Right ventricle myocardium superior (tissue), 1 donor: ENCODE measurements at regions of chr6 and their contacts with region 1.

Region 1: GRCh38 chr6:26043384-26044139 is 43.7 kb upstream of the HFE start:
- DNase-seq: peak; percentile 68
- ATAC-seq: peak; percentile 88

Region 2: DNA sequence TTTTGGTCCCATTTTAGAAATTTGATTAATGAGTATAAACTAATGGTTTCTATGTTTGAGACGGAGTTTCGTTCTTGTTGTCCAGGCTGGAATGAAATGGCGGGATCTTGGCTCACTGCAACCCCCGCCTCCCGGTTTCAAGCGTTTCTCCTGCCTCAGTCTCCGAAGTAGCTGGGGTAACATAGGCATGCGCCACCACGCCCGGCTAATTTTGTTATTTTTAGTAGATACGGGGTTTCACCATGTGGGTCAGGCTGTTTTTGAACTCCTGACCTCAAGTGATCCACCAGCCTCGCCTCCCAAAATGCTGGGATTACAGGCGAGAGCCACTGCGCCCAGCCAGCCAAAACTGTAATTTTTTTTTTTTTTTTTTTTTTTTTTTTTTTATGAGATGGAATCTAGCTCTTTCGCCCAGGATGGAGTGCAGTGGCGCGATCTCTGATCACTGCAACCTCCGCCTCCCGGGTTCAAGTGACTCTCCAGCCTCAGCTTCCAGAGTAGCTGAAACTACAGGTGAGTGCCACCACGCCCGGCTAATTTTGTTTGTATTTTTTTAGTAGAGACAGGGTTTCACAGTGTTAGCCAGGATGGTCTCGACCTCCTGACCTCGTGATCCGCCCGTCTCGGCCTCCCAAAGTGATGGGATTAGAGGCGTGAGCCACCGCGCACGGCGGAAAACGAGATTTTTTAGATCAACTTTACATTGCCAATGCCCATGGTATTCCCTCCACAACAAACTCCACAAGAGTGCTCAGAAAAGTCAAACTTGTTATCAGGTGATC is 171.4 kb after region 1 on chr6:
- intact Hi-C with region 1: loop called (anchors 5 kb)
- DNase-seq: no peak
- ATAC-seq: no peak